ENCODE measurements at regions of chr15 and their contacts with region 1.

Region 1: GRCh38 chr15:70480196-70480856 is 283.0 kb downstream of the UACA start:
- DNase-seq: peak; percentile 89
- H3K4me3 Mint-ChIP-seq: no peak overlapping the region
- H3K27ac Mint-ChIP-seq: peak overlapping the region; percentile 50
- H3K4me1 Mint-ChIP-seq: peaks cover 33% of the 10 kb centered on the region
- H3K27me3 Mint-ChIP-seq: peaks cover 51% of the 10 kb centered on the region

Region 2: GRCh38 chr15:70447928-70448698 is 32.2 kb before region 1 on chr15:
- CTCF ChIA-PET with region 1: no interaction called
- POLR2A ChIA-PET with region 1: no interaction called
- intact Hi-C with region 1: no loop called
- DNase-seq: peak; percentile 49
- H3K4me3 Mint-ChIP-seq: no peak overlapping the region
- H3K27ac Mint-ChIP-seq: no peak overlapping the region
- H3K4me1 Mint-ChIP-seq: peaks cover 30% of the 10 kb centered on the region
- H3K27me3 Mint-ChIP-seq: peaks cover 18% of the 10 kb centered on the region

Region 3: DNA sequence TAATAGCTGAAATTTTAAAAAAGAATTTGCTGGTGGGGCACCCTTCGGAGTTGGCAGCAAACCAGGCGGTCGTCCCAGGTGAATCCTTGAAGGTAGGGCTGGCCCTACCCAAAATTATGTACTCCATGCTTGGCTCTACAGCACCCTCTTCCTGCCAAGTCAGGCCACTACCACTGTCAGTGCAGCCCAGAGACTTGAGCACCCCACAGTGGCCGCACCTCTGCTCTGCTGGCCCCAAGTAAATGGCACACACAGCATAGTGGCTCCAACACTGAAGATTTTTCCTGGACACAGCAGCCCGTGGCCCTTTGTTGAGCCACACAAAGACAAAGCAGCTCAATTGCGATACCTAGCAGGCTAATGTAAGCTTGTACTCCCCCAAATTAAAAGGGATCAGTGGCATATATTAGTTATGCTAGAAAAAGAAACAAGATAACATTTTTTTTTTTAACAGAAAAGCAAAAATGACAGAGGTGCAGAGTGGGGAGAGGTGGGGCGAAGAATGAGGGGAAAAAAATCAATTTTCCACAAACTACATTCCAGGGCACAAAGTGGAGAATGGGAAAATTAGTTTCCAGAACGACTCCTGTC is 32.5 kb after region 1 on chr15:
- CTCF ChIA-PET with region 1: interaction called, 81 read pairs
- POLR2A ChIA-PET with region 1: no interaction called
- intact Hi-C with region 1: loop called (anchors 1 kb)
- DNase-seq: peak; percentile 86
- H3K4me3 Mint-ChIP-seq: no peak overlapping the region
- H3K27ac Mint-ChIP-seq: no peak overlapping the region
- H3K4me1 Mint-ChIP-seq: peaks cover 21% of the 10 kb centered on the region
- H3K27me3 Mint-ChIP-seq: peaks cover 5% of the 10 kb centered on the region

Region 4: DNA sequence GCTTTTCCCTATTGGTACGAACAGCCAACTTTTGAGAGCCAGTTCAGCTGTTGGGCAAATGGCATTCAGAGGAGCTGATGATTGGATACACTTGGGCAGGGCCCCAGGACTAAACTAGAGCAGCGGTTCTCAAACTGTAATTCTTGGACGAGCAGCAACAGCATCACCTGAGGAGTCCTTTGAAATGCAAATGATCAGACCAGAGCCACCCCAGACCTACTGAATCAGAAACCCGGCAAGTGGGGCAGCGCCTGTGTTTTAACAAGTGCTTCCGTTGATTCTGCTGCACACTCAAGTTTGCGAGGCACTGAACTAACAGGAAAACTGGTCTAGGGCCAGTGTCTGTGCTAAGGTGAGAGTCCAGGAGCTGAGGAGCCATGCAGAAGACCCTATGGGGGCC is 43.3 kb after region 1 on chr15:
- CTCF ChIA-PET with region 1: no interaction called
- POLR2A ChIA-PET with region 1: no interaction called
- intact Hi-C with region 1: no loop called
- DNase-seq: no peak
- H3K4me3 Mint-ChIP-seq: no peak overlapping the region
- H3K27ac Mint-ChIP-seq: no peak overlapping the region
- H3K4me1 Mint-ChIP-seq: peaks cover 31% of the 10 kb centered on the region
- H3K27me3 Mint-ChIP-seq: no peaks in the 10 kb centered on the region

Measured in activated CD4-positive, alpha-beta memory T cell treated with anti-CD3 and anti-CD28 coated beads for 36 hours (primary cell).